ENCODE measurements at regions of chr2 and their contacts with region 1.

Region 1: DNA sequence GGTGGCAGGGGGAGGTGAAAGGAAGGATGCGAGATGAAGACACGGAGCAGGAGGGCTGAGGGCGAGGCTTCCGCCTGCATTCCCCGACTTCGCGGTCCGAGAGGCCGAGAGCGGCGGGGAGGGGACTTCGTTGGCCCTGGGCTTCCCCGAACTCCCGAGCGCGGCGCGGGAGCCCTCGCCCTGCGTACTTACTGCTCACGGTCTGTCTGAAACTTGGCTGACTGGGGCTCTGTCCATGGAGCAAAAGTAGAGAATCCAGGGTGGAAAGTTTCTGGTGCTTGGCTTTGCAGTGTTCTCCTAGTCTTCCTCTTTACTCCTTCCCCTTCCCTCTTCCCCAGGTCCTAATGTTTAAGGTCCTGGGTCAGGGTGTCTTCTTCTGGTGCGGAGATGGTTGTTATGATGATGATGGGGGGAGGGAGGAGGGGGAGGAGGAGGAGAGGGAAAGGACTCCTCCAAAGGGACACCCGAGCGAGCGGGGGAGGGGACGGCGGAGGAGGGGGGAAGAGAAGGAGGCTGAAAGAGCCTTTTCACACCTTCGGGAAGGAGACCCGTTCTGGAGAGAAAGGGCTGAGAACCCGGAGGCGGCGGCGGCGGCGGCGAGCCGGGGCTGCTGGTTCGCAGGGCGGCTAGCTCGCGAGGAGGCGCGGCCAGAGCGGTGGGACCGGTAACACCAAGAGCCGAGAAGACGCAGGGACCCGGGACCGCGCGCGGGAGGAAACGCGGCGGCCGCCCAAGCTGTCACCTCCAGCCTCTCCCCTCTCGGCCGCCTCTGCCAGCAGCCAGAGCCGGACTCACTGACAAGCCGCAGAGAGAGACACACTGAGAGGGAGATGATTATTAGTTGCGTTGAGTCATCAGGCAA is at the start of gene SATB2:
- DNase-seq: no peak
- H3K4me3 Mint-ChIP-seq: peak within 1 kb of the TSS; percentile 63
- H3K27ac Mint-ChIP-seq: peak within 1 kb of the TSS; percentile 44
- H3K4me1 Mint-ChIP-seq: peaks cover 19% of the 10 kb centered on the region
- H3K27me3 Mint-ChIP-seq: peaks cover 59% of the 10 kb centered on the region
- total RNA-seq, gene SATB2: 0.02 TPM in 1 of 2 replicates, not detected in the other

Region 2: DNA sequence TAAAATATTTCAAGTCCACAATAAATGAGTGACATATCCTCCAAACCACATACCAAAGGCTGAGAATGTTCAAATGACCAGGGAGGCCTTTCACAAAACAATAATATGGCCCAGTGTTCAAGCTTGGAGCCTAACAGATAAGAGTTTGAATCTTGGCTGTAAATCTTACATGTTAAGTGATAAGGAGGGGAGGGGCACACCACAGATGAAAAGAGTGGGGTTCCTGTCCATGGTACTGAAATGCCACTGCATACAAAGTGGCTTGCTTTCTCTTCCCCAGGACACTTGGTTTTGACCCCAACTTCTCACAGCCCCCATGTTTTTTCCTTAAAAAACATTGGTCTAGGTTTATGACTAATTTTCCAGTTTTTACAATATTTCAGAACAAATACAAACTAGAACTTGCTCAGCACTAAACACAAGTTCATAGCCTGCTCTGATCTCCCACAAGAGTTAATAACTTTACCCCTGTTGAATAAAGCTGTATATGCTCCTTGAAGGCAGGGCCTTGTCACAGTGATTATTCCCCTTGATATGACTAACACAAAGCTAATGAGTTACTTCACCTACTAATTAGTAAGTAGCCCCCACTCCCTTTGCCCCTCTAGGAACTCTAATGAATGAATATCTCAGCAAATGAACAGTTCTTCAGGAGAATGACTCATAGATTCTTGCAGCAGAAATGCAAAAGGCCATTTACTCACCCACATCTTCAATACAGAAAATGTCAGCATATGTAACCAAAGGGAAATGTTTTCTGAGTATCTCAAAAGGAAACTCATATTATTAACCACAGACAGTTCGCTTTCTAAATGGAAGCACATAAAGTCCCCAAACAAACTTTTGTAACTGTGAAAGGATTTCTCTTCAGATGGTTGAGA is 141.8 kb before region 1 on chr2:
- intact Hi-C with region 1: no loop called
- DNase-seq: no peak
- H3K4me3 Mint-ChIP-seq: no peak overlapping the region
- H3K27ac Mint-ChIP-seq: no peak overlapping the region
- H3K4me1 Mint-ChIP-seq: no peaks in the 10 kb centered on the region
- H3K27me3 Mint-ChIP-seq: no peaks in the 10 kb centered on the region

Region 3: DNA sequence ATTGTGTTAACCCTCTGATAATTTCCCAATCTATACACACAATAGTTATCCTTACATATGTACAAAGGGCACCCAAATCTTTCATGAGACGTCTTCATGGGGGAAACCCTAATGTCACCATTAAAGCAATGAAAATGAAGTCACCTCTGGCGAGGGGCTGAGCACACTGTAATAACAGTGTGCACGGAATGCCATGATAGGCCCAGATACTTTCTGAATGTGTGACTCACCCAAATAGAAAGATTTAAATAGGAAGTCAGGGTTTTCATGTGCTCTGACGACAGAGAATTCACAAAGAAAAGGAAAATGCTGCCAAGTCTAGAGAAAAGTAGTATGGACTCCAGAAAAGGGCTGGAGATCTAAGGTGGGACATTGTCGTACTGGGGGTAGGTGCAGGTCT is 127.9 kb before region 1 on chr2:
- intact Hi-C with region 1: no loop called
- DNase-seq: no peak
- H3K4me3 Mint-ChIP-seq: no peak overlapping the region
- H3K27ac Mint-ChIP-seq: no peak overlapping the region
- H3K4me1 Mint-ChIP-seq: no peaks in the 10 kb centered on the region
- H3K27me3 Mint-ChIP-seq: no peaks in the 10 kb centered on the region

Region 4: GRCh38 chr2:199468561-199469513 is 11.5 kb after region 1 on chr2:
- intact Hi-C with region 1: loop called (anchors 1 kb)
- DNase-seq: no peak
- H3K4me3 Mint-ChIP-seq: no peak overlapping the region
- H3K27ac Mint-ChIP-seq: peak overlapping the region; percentile 34
- H3K4me1 Mint-ChIP-seq: no peaks in the 10 kb centered on the region
- H3K27me3 Mint-ChIP-seq: peaks cover 81% of the 10 kb centered on the region